AG04450 (cell line): ENCODE measurements at regions of chr3 and their contacts with region 1.

Region 1: GRCh38 chr3:15332405-15333098 is at the start of gene SH3BP5:
- DNase-seq: no peak
- H3K4me3 ChIP-seq: peak within 1 kb of the TSS; percentile 87
- H3K27ac ChIP-seq: no peak within 1 kb of the TSS
- H3K27me3 ChIP-seq: no peaks in the 10 kb centered on the region
- CTCF ChIP-seq: peak; percentile 56
- polyA plus RNA-seq, gene SH3BP5: 15.5 and 16.6 TPM in 2 replicates

Region 2: GRCh38 chr3:15319575-15319974 is 13.0 kb before region 1 on chr3:
- CTCF ChIA-PET with region 1: interaction called, 15 read pairs
- POLR2A ChIA-PET with region 1: interaction called, 4 read pairs
- DNase-seq: no peak
- H3K4me3 ChIP-seq: no peak overlapping the region
- H3K27ac ChIP-seq: no peak overlapping the region
- H3K27me3 ChIP-seq: no peaks in the 10 kb centered on the region
- CTCF ChIP-seq: no peak

Region 3: GRCh38 chr3:15345608-15346137 is 13.1 kb after region 1 on chr3:
- CTCF ChIA-PET with region 1: interaction called, 18 read pairs
- POLR2A ChIA-PET with region 1: no interaction called
- DNase-seq: no peak
- H3K4me3 ChIP-seq: no peak overlapping the region
- H3K27ac ChIP-seq: no peak overlapping the region
- H3K27me3 ChIP-seq: peaks cover 25% of the 10 kb centered on the region
- CTCF ChIP-seq: no peak

Region 4: GRCh38 chr3:15354485-15354884 is 21.9 kb after region 1 on chr3:
- CTCF ChIA-PET with region 1: interaction called, 11 read pairs
- POLR2A ChIA-PET with region 1: interaction called, 3 read pairs
- DNase-seq: no peak
- H3K4me3 ChIP-seq: no peak overlapping the region
- H3K27ac ChIP-seq: no peak overlapping the region
- H3K27me3 ChIP-seq: peaks cover 4% of the 10 kb centered on the region
- CTCF ChIP-seq: no peak